ENCODE measurements at regions of chr4 and their contacts with region 1.

Region 1: DNA sequence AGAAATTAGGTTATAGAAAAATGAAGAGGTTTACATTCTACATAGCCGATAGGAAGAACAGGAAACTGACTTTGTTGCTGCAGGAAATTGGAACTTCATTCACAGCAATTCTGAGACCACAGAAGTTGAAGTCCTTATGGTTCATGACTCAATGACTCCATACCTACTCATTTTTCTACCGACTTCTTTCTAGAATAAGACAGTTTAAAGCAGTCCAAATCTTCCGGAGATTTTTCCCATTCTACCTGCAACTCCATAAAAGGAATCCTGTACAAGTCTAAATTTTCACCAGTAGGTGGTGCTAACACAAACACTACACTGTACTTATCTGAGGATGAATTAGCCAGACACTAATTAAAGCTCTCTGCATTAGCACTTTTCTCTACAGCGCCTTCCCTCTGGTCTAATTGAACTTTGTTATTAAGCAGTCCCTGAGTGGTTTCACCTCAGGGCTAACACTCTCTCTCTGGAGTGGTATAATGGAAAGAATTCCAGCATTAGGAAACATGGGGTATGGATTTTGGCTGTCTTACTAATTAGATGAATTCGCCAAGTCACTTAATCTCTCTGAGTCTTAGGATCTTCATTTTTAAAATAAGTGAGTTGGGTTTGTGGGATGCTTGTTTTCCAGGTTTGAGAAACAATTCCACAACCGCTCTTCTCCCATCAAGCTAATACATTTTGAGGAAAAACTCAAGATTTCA is 167.9 kb downstream of the SMIM20 start:
- DNase-seq: no peak
- H3K4me3 ChIP-seq: no peak overlapping the region
- H3K27ac ChIP-seq: peak overlapping the region in 1 of 8 donors; percentile 41
- H3K4me1 ChIP-seq: peaks cover 5 to 39% (median 10%) of the 10 kb centered on the region in 6 donors
- H3K27me3 ChIP-seq: peaks cover 0 to 9% (median 0%) of the 10 kb centered on the region in 7 donors
- CTCF ChIP-seq: peak; percentile 20 to 80 (median 65)
- POLR2A ChIP-seq: no peak

Region 2: DNA sequence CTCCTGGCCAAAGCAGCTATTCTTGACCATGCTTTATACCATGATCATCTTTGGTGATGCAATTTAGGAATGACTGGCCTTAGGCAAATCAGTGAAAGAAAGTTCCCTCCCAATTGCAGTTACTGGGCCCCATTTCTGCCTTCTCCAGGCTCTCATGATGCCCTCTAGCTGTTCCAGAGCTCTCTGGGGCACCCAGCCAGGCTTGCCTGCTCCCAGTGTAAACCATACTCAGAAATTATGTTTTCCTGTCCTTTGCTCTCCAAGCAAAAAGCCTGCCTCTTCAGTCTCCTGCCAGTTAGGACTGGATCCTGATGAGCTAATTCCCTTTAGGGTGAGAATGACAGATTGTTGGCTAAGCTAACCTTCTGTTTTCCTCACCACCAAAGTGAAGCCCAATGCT is 153.6 kb after region 1 on chr4:
- intact Hi-C with region 1: no loop called
- DNase-seq: no peak
- H3K4me3 ChIP-seq: no peak overlapping the region
- H3K27ac ChIP-seq: no peak overlapping the region
- H3K4me1 ChIP-seq: peaks cover 0 to 11% (median 0%) of the 10 kb centered on the region in 6 donors
- H3K27me3 ChIP-seq: no peaks in the 10 kb centered on the region
- CTCF ChIP-seq: no peak
- POLR2A ChIP-seq: no peak

Region 3: DNA sequence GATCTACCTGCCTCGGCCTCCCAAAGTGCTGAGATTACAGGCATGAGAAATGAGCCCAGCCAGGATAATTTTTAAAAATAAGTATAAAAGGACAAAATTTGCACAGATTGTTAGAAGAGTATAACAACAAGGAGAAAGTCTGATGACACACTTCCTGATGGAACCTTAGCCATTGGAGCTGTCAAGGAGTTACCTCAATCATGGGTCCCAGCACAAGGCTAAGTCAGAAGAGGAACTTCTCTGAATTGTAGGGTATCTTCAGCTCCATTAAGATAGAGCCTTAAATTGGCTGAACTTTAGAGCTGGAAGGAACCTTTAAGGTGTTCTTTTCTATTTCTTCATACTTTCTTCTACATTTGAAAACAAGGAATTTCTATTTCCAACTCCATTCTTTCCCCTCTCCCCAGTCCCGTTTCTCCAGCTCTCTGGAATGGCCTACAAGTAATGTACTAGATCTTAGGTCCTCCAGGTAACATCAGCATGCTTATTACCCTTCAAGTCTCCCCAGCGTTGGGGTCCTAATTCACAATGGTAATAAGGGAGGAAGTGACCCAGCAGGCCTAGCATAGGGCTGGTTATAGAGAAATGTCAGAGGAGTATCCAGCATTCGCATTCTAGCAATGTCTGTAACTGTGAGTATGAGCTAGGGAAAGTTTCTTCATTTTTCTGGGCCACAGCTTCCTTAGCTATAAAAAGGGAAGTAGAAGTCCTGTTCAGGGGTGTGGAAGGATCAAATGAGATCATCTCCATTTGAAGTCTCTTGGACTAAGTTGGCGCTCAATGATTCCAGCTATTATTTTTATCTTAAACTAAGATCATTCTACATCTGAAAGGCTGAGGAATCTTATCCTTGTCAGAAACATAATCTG is 220.3 kb after region 1 on chr4:
- intact Hi-C with region 1: loop called (anchors 10 kb)
- DNase-seq: no peak
- H3K4me3 ChIP-seq: no peak overlapping the region
- H3K27ac ChIP-seq: peak overlapping the region in 4 of 8 donors; percentile 37 to 67 (median 64)
- H3K4me1 ChIP-seq: peaks cover 0 to 18% (median 0%) of the 10 kb centered on the region in 6 donors
- H3K27me3 ChIP-seq: no peaks in the 10 kb centered on the region
- CTCF ChIP-seq: no peak
- POLR2A ChIP-seq: no peak

Region 4: GRCh38 chr4:26410385-26411293 is 328.7 kb after region 1 on chr4:
- intact Hi-C with region 1: loop called (anchors 5 kb)
- DNase-seq: no peak
- H3K4me3 ChIP-seq: no peak overlapping the region
- H3K27ac ChIP-seq: no peak overlapping the region
- H3K4me1 ChIP-seq: peaks cover 0 to 21% (median 9%) of the 10 kb centered on the region in 6 donors
- H3K27me3 ChIP-seq: no peaks in the 10 kb centered on the region
- CTCF ChIP-seq: peak; percentile 33 to 74 (median 64)
- POLR2A ChIP-seq: no peak